ENCODE measurements at regions of chr4 and their contacts with region 1.

Region 1: GRCh38 chr4:10554694-10555093 is 97.5 kb upstream of the ZNF518B start:
- DNase-seq: peak; percentile 31
- ATAC-seq: peak; percentile 94
- H3K4me3 ChIP-seq: no peak overlapping the region
- H3K27ac ChIP-seq: no peak overlapping the region
- H3K4me1 ChIP-seq: no peaks in the 10 kb centered on the region
- H3K27me3 ChIP-seq: no peaks in the 10 kb centered on the region
- CTCF ChIP-seq: peak; percentile 72 to 82 (median 79)
- EP300 ChIP-seq: no peak
- POLR2A ChIP-seq: no peak
- RAD21 ChIP-seq: peak; percentile 84

Region 2: DNA sequence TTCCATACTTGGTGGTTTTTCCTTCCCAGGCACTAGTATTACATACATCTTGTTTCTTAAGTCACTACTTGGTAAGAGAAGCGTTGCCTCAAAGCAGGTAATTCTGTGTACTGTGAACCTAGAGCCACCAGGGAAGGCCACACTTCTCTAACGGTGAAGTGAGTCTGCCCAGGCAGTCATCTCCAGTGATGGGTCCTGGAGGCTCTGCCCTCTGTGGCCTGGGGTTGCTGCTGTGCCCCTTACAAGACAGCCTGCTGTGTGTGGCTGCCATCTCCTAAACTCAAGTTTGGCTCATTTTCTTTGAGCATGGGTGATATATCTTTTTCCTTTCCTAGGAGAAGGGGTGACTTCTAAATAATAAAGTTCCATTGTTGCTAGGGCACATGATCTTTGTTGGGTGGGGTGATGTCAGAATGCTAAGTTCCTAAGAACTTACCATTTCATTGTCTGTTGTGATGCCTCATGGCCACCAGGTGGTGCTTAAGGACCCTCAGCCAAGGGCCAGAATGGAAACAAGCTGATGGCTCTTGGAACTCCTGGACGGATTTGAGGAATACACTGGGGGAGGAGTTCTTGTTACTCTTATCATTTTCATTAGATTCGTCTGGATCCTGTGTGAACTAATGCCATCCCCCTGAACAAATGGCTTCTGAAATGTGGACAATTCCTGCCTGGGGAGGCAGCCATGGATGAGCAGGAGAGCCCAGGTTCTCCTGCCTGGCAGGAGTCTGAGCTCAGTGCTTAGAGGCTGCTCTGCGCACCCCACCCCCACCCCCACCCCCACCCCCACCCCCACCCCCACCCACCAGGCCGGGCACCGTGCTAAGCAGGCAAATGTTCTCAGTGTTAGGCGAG is 397.0 kb before region 1 on chr4:
- CTCF ChIA-PET with region 1: interaction called, 11 read pairs
- POLR2A ChIA-PET with region 1: no interaction called
- RAD21 ChIA-PET with region 1: no interaction called
- SMC1A ChIA-PET with region 1: interaction called, 10 read pairs
- in situ Hi-C with region 1: no loop called
- intact Hi-C with region 1: loop called (anchors 2 kb)
- DNase-seq: peak; percentile 9
- ATAC-seq: peak; percentile 89
- H3K4me3 ChIP-seq: no peak overlapping the region
- H3K27ac ChIP-seq: no peak overlapping the region
- H3K4me1 ChIP-seq: no peaks in the 10 kb centered on the region
- H3K27me3 ChIP-seq: no peaks in the 10 kb centered on the region
- CTCF ChIP-seq: peak; percentile 77 to 83 (median 80)
- EP300 ChIP-seq: no peak
- POLR2A ChIP-seq: no peak
- RAD21 ChIP-seq: peak; percentile 88

Region 3: DNA sequence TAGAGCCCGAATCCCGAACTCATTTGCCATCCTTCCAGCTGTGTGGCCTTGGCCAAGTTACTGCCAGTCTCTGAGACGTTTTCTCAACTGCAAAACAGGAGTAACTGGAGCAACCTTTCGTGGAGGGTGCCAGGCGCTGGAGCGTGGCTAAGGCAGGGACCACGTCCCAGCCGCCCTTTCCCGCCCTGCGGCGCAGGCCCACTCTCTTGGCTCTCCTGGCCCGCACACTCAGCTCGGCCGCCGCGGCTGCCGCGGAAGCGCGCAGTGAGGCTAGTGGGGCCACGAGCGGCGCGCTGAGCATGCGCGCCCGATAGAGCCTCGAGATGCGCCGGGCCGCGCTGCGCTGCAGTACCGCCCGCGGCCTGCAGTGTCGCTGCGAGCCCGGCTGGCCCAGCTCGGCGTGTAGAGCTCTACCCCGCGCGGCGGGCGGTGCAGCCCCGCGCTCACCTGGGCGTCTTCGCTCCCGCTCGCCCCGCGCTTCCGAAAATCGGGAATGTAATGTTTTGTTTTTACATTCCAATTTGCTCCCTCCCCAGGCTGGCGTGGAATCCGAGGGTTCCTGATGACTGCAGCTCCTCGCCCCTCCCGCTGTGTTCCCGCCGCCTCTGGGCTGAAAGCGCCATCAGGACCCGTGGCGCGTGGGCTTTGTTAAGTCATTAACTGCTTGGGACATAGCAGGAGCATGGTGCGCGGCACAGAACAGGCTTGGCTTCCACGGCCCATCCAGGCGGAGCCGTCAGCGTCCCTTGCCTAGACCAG is 93.4 kb before region 1 on chr4:
- CTCF ChIA-PET with region 1: interaction called, 15 read pairs
- POLR2A ChIA-PET with region 1: no interaction called
- RAD21 ChIA-PET with region 1: no interaction called
- SMC1A ChIA-PET with region 1: no interaction called
- in situ Hi-C with region 1: no loop called
- intact Hi-C with region 1: no loop called
- DNase-seq: peak; percentile 31
- ATAC-seq: peak; percentile 84
- H3K4me3 ChIP-seq: peak overlapping the region; percentile 43; the same call in 1 of the 2 replicates
- H3K27ac ChIP-seq: no peak overlapping the region
- H3K4me1 ChIP-seq: no peaks in the 10 kb centered on the region
- H3K27me3 ChIP-seq: peaks cover 0 to 5% of the 10 kb centered on the region in 2 experiments; a peak in 3 of 4 replicates
- CTCF ChIP-seq: peak; percentile 85 to 90 (median 86)
- EP300 ChIP-seq: no peak
- POLR2A ChIP-seq: peak; percentile 42; the same call in 1 of the 2 replicates
- RAD21 ChIP-seq: peak; percentile 55

Region 4: GRCh38 chr4:10577018-10577417 is 22.3 kb after region 1 on chr4:
- CTCF ChIA-PET with region 1: interaction called, 12 read pairs
- POLR2A ChIA-PET with region 1: no interaction called
- RAD21 ChIA-PET with region 1: interaction called, 6 read pairs
- SMC1A ChIA-PET with region 1: interaction called, 11 read pairs
- in situ Hi-C with region 1: no loop called
- intact Hi-C with region 1: no loop called
- DNase-seq: no peak
- ATAC-seq: peak; percentile 74
- H3K4me3 ChIP-seq: no peak overlapping the region
- H3K27ac ChIP-seq: no peak overlapping the region
- H3K4me1 ChIP-seq: peaks cover 15% of the 10 kb centered on the region
- H3K27me3 ChIP-seq: no peaks in the 10 kb centered on the region
- CTCF ChIP-seq: no peak
- EP300 ChIP-seq: no peak
- POLR2A ChIP-seq: no peak
- RAD21 ChIP-seq: no peak

Region 5: GRCh38 chr4:10831727-10832408 is 277.2 kb after region 1 on chr4:
- CTCF ChIA-PET with region 1: no interaction called
- POLR2A ChIA-PET with region 1: no interaction called
- RAD21 ChIA-PET with region 1: no interaction called
- SMC1A ChIA-PET with region 1: no interaction called
- in situ Hi-C with region 1: no loop called
- intact Hi-C with region 1: no loop called
- DNase-seq: no peak
- ATAC-seq: no peak
- H3K4me3 ChIP-seq: no peak overlapping the region
- H3K27ac ChIP-seq: no peak overlapping the region
- H3K4me1 ChIP-seq: no peaks in the 10 kb centered on the region
- H3K27me3 ChIP-seq: no peaks in the 10 kb centered on the region
- CTCF ChIP-seq: no peak
- EP300 ChIP-seq: no peak
- POLR2A ChIP-seq: no peak
- RAD21 ChIP-seq: no peak

Region 6: GRCh38 chr4:11424000-11424399 is 869.3 kb after region 1 on chr4:
- CTCF ChIA-PET with region 1: interaction called, 24 read pairs
- POLR2A ChIA-PET with region 1: no interaction called
- RAD21 ChIA-PET with region 1: interaction called, 3 read pairs
- SMC1A ChIA-PET with region 1: interaction called, 4 read pairs
- in situ Hi-C with region 1: no loop called
- intact Hi-C with region 1: loop called (anchors 1 kb)
- DNase-seq: no peak
- ATAC-seq: peak; percentile 62
- H3K4me3 ChIP-seq: no peak overlapping the region
- H3K27ac ChIP-seq: no peak overlapping the region
- H3K4me1 ChIP-seq: no peaks in the 10 kb centered on the region
- H3K27me3 ChIP-seq: peaks cover 2 to 8% of the 10 kb centered on the region in 2 experiments
- CTCF ChIP-seq: peak; percentile 37 to 66 (median 56)
- EP300 ChIP-seq: no peak
- POLR2A ChIP-seq: no peak
- RAD21 ChIP-seq: peak; percentile 75

Region 7: GRCh38 chr4:11720292-11720691 is 1165.6 kb after region 1 on chr4:
- CTCF ChIA-PET with region 1: interaction called, 6 read pairs
- POLR2A ChIA-PET with region 1: no interaction called
- RAD21 ChIA-PET with region 1: no interaction called
- SMC1A ChIA-PET with region 1: no interaction called
- in situ Hi-C with region 1: loop called (anchors 10 kb)
- intact Hi-C with region 1: loop called (anchors 2 kb)
- DNase-seq: no peak
- ATAC-seq: peak; percentile 51; the same call in 2 of the 3 replicates
- H3K4me3 ChIP-seq: no peak overlapping the region
- H3K27ac ChIP-seq: no peak overlapping the region
- H3K4me1 ChIP-seq: no peaks in the 10 kb centered on the region
- H3K27me3 ChIP-seq: no peaks in the 10 kb centered on the region
- CTCF ChIP-seq: peak; percentile 36 to 51 (median 39); a peak in 5 of 6 replicates
- EP300 ChIP-seq: no peak
- POLR2A ChIP-seq: no peak
- RAD21 ChIP-seq: peak; percentile 67